Panc1 (cell line): ENCODE measurements at regions of chr12 and their contacts with region 1.

Region 1: GRCh38 chr12:25883026-25883916 is 75.2 kb upstream of the RASSF8 start:
- DNase-seq: no peak
- ATAC-seq: no peak
- H3K4me3 ChIP-seq: no peak overlapping the region
- H3K27ac ChIP-seq: no peak overlapping the region
- H3K4me1 ChIP-seq: no peaks in the 10 kb centered on the region
- H3K27me3 ChIP-seq: peaks cover 11% of the 10 kb centered on the region
- CTCF ChIP-seq: no peak

Region 2: DNA sequence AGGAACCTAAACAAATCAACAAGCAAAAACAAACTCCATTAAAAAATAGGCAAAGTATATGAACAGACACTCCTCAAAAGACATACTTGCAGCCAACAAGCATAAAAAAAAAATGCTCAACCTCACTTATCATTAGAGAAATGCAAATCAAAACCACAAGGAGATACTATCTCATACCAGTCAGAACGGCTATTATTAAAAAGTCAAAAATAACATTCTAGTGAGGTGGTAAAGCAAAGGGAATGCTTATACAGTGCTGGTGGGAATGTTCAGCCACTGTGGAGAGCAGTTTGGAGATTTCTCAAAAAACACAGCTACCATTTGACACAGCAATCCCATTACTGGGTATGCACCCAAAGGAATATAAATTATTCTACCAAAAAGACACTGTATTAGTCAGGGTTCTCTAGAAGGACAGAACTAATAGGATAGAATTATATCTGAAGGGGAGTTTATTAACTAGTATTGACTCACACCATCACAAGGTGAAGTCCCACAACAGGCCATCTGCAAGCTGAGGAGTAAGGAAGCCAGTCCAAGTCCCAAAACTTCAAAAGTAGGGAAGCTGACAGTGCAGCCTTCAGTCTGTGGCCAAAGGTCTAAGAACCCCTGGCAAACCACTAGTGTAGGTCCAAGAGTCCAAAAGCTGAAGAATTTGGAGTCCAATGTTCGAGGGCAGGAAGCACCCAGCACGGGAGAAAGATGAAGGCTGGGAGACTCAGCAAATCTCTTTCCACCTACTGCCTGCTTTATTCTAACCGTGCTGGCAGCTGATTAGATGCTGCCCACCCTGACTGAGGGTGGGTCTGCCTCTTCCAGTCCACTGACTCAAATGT is 531.0 kb before region 1 on chr12:
- CTCF ChIA-PET with region 1: interaction called, 14 read pairs
- POLR2A ChIA-PET with region 1: no interaction called
- in situ Hi-C with region 1: no loop called
- intact Hi-C with region 1: no loop called
- DNase-seq: no peak
- ATAC-seq: no peak
- H3K4me3 ChIP-seq: no peak overlapping the region
- H3K27ac ChIP-seq: no peak overlapping the region
- H3K4me1 ChIP-seq: no peaks in the 10 kb centered on the region
- H3K27me3 ChIP-seq: peaks cover 3% of the 10 kb centered on the region; the same call in 1 of the 2 replicates
- CTCF ChIP-seq: no peak

Region 3: DNA sequence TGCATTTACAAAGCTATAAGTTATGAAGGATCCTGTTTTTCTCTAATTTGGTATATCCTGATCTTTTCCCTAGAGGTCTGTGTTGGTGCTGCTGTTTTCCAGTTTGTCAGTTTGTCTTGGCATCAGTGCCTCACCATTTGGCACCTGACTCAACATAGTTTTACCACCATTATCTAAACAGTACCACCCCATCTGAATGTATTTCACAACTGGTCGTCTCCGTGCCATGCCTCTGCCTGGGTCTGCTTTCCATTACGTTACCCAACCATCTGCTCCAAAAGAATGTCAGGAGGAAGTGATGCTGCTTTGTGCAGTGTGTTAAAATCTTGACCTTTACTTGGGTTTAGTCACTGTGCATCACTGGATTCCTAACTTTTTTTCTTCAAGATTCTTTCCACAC is 54.1 kb before region 1 on chr12:
- CTCF ChIA-PET with region 1: no interaction called
- POLR2A ChIA-PET with region 1: no interaction called
- in situ Hi-C with region 1: no loop called
- intact Hi-C with region 1: no loop called
- DNase-seq: no peak
- ATAC-seq: no peak
- H3K4me3 ChIP-seq: no peak overlapping the region
- H3K27ac ChIP-seq: no peak overlapping the region
- H3K4me1 ChIP-seq: no peaks in the 10 kb centered on the region
- H3K27me3 ChIP-seq: peaks cover 19% of the 10 kb centered on the region; the same call in 1 of the 2 replicates
- CTCF ChIP-seq: 0 out of 2 replicates have a peak, but pooled peaks have one; percentile 7